Mammary epithelial cell (primary cell): ENCODE measurements at regions of chr10 and their contacts with region 1.

Region 1: DNA sequence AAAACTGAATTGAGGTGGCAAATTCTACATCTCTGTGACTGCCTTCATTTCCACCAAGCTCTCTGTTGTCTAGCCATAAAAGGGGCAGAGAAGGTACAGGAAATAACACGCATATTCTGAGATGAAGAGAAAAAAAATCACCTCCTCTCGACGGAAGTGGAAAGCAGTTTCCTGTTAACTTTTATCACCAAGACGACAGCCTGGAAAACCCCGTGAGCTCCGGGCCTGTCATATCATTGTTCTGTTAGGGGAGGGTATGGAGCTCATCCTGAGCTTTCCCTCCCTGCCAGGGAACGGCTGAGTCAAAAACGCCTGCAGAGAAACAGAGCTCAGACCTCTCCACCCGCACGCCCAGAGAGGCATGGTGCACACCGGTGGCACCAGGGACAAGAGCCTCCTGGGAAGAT is 200.3 kb downstream of the PRPF18 start:
- DNase-seq: peak; percentile 70
- H3K4me3 ChIP-seq: no peak overlapping the region
- H3K27ac ChIP-seq: peak overlapping the region; percentile 81
- H3K4me1 ChIP-seq: peaks cover 17% of the 10 kb centered on the region
- H3K27me3 ChIP-seq: no peaks in the 10 kb centered on the region
- CTCF ChIP-seq: no peak

Region 2: GRCh38 chr10:13776861-13777311 is 10.1 kb before region 1 on chr10:
- CTCF ChIA-PET with region 1: no interaction called
- dilution Hi-C with region 1: no loop called
- in situ Hi-C with region 1: no loop called
- intact Hi-C with region 1: no loop called
- DNase-seq: peak; percentile 61
- H3K4me3 ChIP-seq: no peak overlapping the region
- H3K27ac ChIP-seq: peak overlapping the region; percentile 65
- H3K4me1 ChIP-seq: peaks cover 45% of the 10 kb centered on the region
- H3K27me3 ChIP-seq: no peaks in the 10 kb centered on the region
- CTCF ChIP-seq: no peak

Region 3: GRCh38 chr10:13990946-13991345 is 203.9 kb after region 1 on chr10:
- CTCF ChIA-PET with region 1: no interaction called
- dilution Hi-C with region 1: no loop called
- in situ Hi-C with region 1: no loop called
- intact Hi-C with region 1: loop called (anchors 10 kb)
- DNase-seq: no peak
- H3K4me3 ChIP-seq: no peak overlapping the region
- H3K27ac ChIP-seq: no peak overlapping the region
- H3K4me1 ChIP-seq: peaks cover 26% of the 10 kb centered on the region
- H3K27me3 ChIP-seq: no peaks in the 10 kb centered on the region
- CTCF ChIP-seq: no peak

Region 4: GRCh38 chr10:14093730-14094484 is 306.9 kb after region 1 on chr10:
- CTCF ChIA-PET with region 1: interaction called, 24 read pairs
- dilution Hi-C with region 1: loop called (anchors 5 kb)
- in situ Hi-C with region 1: loop called (anchors 5 to 10 kb)
- intact Hi-C with region 1: loop called (anchors 1 kb)
- DNase-seq: no peak
- H3K4me3 ChIP-seq: no peak overlapping the region
- H3K27ac ChIP-seq: no peak overlapping the region
- H3K4me1 ChIP-seq: no peaks in the 10 kb centered on the region
- H3K27me3 ChIP-seq: no peaks in the 10 kb centered on the region
- CTCF ChIP-seq: peak; percentile 34 to 61

Region 5: GRCh38 chr10:14184841-14185315 is 397.9 kb after region 1 on chr10:
- CTCF ChIA-PET with region 1: no interaction called
- dilution Hi-C with region 1: no loop called
- in situ Hi-C with region 1: no loop called
- intact Hi-C with region 1: loop called (anchors 5 kb)
- DNase-seq: peak; percentile 87
- H3K4me3 ChIP-seq: no peak overlapping the region
- H3K27ac ChIP-seq: peak overlapping the region; percentile 36
- H3K4me1 ChIP-seq: peaks cover 3% of the 10 kb centered on the region
- H3K27me3 ChIP-seq: peaks cover 7% of the 10 kb centered on the region
- CTCF ChIP-seq: no peak

Region 6: GRCh38 chr10:14195433-14195832 is 408.4 kb after region 1 on chr10:
- CTCF ChIA-PET with region 1: no interaction called
- dilution Hi-C with region 1: no loop called
- in situ Hi-C with region 1: no loop called
- intact Hi-C with region 1: loop called (anchors 2 kb)
- DNase-seq: no peak
- H3K4me3 ChIP-seq: no peak overlapping the region
- H3K27ac ChIP-seq: no peak overlapping the region
- H3K4me1 ChIP-seq: no peaks in the 10 kb centered on the region
- H3K27me3 ChIP-seq: peaks cover 2% of the 10 kb centered on the region
- CTCF ChIP-seq: no peak

Region 7: GRCh38 chr10:14478604-14479003 is 691.6 kb after region 1 on chr10:
- CTCF ChIA-PET with region 1: no interaction called
- dilution Hi-C with region 1: no loop called
- in situ Hi-C with region 1: loop called in 1 of 2 experiments (anchors 25 kb)
- intact Hi-C with region 1: loop called (anchors 1 kb)
- DNase-seq: peak; percentile 47
- H3K4me3 ChIP-seq: no peak overlapping the region
- H3K27ac ChIP-seq: no peak overlapping the region
- H3K4me1 ChIP-seq: peaks cover 14% of the 10 kb centered on the region
- H3K27me3 ChIP-seq: no peaks in the 10 kb centered on the region
- CTCF ChIP-seq: peak; percentile 60 to 79

Region 8: GRCh38 chr10:14822879-14823755 is 1036.1 kb after region 1 on chr10:
- CTCF ChIA-PET with region 1: no interaction called
- dilution Hi-C with region 1: no loop called
- in situ Hi-C with region 1: loop called in 1 of 2 experiments (anchors 25 kb)
- intact Hi-C with region 1: loop called (anchors 5 kb)
- DNase-seq: peak; percentile 12
- H3K4me3 ChIP-seq: no peak overlapping the region
- H3K27ac ChIP-seq: no peak overlapping the region
- H3K4me1 ChIP-seq: peaks cover 7% of the 10 kb centered on the region
- H3K27me3 ChIP-seq: no peaks in the 10 kb centered on the region
- CTCF ChIP-seq: peak; percentile 57 to 72